B cell (primary cell): ENCODE measurements at regions of chr17 and their contacts with region 1.

Region 1: GRCh38 chr17:82518826-82519810 is at the start of gene FOXK2:
- DNase-seq: peak; percentile 96
- ATAC-seq: peak; percentile 97
- H3K4me3 ChIP-seq: peak within 1 kb of the TSS; percentile 50 to 71 (median 64)
- H3K4me3 Mint-ChIP-seq: peak within 1 kb of the TSS; percentile 88
- H3K27ac ChIP-seq: peak within 1 kb of the TSS; percentile 72 to 82
- H3K27ac Mint-ChIP-seq: peak within 1 kb of the TSS; percentile 87
- H3K4me1 ChIP-seq: peaks cover 8 to 23% of the 10 kb centered on the region in 2 donors
- H3K4me1 Mint-ChIP-seq: peaks cover 20% of the 10 kb centered on the region
- H3K27me3 ChIP-seq: no peaks in the 10 kb centered on the region
- H3K27me3 Mint-ChIP-seq: no peaks in the 10 kb centered on the region
- CTCF ChIP-seq: no peak
- total RNA-seq, gene FOXK2: 62.7 and 64.3 TPM in 2 replicates

Region 2: GRCh38 chr17:82450170-82451106 is 68.7 kb before region 1 on chr17 and contains the start of gene CYBC1:
- CTCF ChIA-PET with region 1: no interaction called
- POLR2A ChIA-PET with region 1: interaction called, 6 read pairs
- intact Hi-C with region 1: loop called (anchors 2 kb)
- DNase-seq: peak; percentile 97
- ATAC-seq: peak; percentile 55
- H3K4me3 ChIP-seq: peak within 1 kb of the TSS; percentile 81 to 99 (median 93)
- H3K4me3 Mint-ChIP-seq: peak within 1 kb of the TSS; percentile 88
- H3K27ac ChIP-seq: peak within 1 kb of the TSS; percentile 95 to 99
- H3K27ac Mint-ChIP-seq: peak within 1 kb of the TSS; percentile 96
- H3K4me1 ChIP-seq: peaks cover 17 to 47% of the 10 kb centered on the region in 2 donors
- H3K4me1 Mint-ChIP-seq: peaks cover 40% of the 10 kb centered on the region
- H3K27me3 ChIP-seq: no peaks in the 10 kb centered on the region
- H3K27me3 Mint-ChIP-seq: no peaks in the 10 kb centered on the region
- CTCF ChIP-seq: no peak
- total RNA-seq, gene CYBC1: 569 and 578 TPM in 2 replicates

Region 3: GRCh38 chr17:82457997-82458864 is 60.9 kb before region 1 on chr17 and contains the start of gene NARF:
- CTCF ChIA-PET with region 1: no interaction called
- POLR2A ChIA-PET with region 1: interaction called, 5 read pairs
- intact Hi-C with region 1: loop called (anchors 2 kb)
- DNase-seq: peak; percentile 97
- ATAC-seq: peak; percentile 96
- H3K4me3 ChIP-seq: peak within 1 kb of the TSS; percentile 53 to 82 (median 74)
- H3K4me3 Mint-ChIP-seq: peak within 1 kb of the TSS; percentile 81
- H3K27ac ChIP-seq: peak within 1 kb of the TSS; percentile 91 to 99
- H3K27ac Mint-ChIP-seq: peak within 1 kb of the TSS; percentile 90
- H3K4me1 ChIP-seq: peaks cover 13 to 19% of the 10 kb centered on the region in 2 donors
- H3K4me1 Mint-ChIP-seq: peaks cover 19% of the 10 kb centered on the region
- H3K27me3 ChIP-seq: no peaks in the 10 kb centered on the region
- H3K27me3 Mint-ChIP-seq: no peaks in the 10 kb centered on the region
- CTCF ChIP-seq: no peak
- total RNA-seq, gene NARF: 103 and 104 TPM in 2 replicates

Region 4: GRCh38 chr17:82487910-82488309 is 31.2 kb before region 1 on chr17:
- CTCF ChIA-PET with region 1: no interaction called
- POLR2A ChIA-PET with region 1: no interaction called
- intact Hi-C with region 1: no loop called
- DNase-seq: no peak
- ATAC-seq: no peak
- H3K4me3 ChIP-seq: no peak overlapping the region
- H3K4me3 Mint-ChIP-seq: no peak overlapping the region
- H3K27ac ChIP-seq: no peak overlapping the region
- H3K27ac Mint-ChIP-seq: no peak overlapping the region
- H3K4me1 ChIP-seq: peaks cover 0 to 9% of the 10 kb centered on the region in 2 donors
- H3K4me1 Mint-ChIP-seq: peaks cover 6% of the 10 kb centered on the region
- H3K27me3 ChIP-seq: no peaks in the 10 kb centered on the region
- H3K27me3 Mint-ChIP-seq: no peaks in the 10 kb centered on the region
- CTCF ChIP-seq: no peak

Region 5: DNA sequence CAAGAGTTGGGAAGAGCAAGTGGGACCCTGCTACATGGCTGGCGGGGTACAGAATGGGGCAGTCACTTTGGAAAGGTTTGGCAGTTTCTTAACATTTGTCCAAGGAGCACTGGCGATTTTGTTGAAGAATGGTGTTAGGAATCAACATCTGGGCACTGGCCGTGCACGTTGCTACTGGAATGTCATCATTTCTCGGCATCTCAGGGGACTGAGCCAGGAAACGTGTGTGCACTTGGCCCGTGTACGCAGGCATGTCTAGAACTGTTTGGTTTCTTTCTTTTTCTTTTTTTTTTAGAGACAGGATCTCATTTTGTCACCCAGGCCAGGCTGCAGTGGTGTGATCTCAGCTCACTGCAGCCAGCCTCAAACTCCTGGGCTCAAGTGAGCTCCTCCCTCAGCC is 16.9 kb before region 1 on chr17:
- CTCF ChIA-PET with region 1: interaction called, 5 read pairs
- POLR2A ChIA-PET with region 1: interaction called, 8 read pairs
- intact Hi-C with region 1: loop called (anchors 1 kb)
- DNase-seq: no peak
- ATAC-seq: no peak
- H3K4me3 ChIP-seq: no peak overlapping the region
- H3K4me3 Mint-ChIP-seq: no peak overlapping the region
- H3K27ac ChIP-seq: no peak overlapping the region
- H3K27ac Mint-ChIP-seq: peak overlapping the region; percentile 20
- H3K4me1 ChIP-seq: peaks cover 3 to 23% of the 10 kb centered on the region in 2 donors
- H3K4me1 Mint-ChIP-seq: peaks cover 20% of the 10 kb centered on the region
- H3K27me3 ChIP-seq: peaks cover 0 to 4% (median 0%) of the 10 kb centered on the region in 4 experiments
- H3K27me3 Mint-ChIP-seq: no peaks in the 10 kb centered on the region
- CTCF ChIP-seq: no peak